Activated CD4-positive, alpha-beta memory T cell treated with anti-CD3 and anti-CD28 coated beads, Interleukin-2, amount 10 ng/mL, durations not matched to agents 7 days and 5 days (primary cell): ENCODE measurements at regions of chr14 and their contacts with region 1.

Region 1: GRCh38 chr14:52563120-52563519 is 10.5 kb downstream of the GPR137C start:
- DNase-seq: no peak
- H3K4me3 Mint-ChIP-seq: no peak overlapping the region
- H3K27ac Mint-ChIP-seq: no peak overlapping the region
- H3K4me1 Mint-ChIP-seq: no peaks in the 10 kb centered on the region
- H3K27me3 Mint-ChIP-seq: peaks cover 30% of the 10 kb centered on the region

Region 2: DNA sequence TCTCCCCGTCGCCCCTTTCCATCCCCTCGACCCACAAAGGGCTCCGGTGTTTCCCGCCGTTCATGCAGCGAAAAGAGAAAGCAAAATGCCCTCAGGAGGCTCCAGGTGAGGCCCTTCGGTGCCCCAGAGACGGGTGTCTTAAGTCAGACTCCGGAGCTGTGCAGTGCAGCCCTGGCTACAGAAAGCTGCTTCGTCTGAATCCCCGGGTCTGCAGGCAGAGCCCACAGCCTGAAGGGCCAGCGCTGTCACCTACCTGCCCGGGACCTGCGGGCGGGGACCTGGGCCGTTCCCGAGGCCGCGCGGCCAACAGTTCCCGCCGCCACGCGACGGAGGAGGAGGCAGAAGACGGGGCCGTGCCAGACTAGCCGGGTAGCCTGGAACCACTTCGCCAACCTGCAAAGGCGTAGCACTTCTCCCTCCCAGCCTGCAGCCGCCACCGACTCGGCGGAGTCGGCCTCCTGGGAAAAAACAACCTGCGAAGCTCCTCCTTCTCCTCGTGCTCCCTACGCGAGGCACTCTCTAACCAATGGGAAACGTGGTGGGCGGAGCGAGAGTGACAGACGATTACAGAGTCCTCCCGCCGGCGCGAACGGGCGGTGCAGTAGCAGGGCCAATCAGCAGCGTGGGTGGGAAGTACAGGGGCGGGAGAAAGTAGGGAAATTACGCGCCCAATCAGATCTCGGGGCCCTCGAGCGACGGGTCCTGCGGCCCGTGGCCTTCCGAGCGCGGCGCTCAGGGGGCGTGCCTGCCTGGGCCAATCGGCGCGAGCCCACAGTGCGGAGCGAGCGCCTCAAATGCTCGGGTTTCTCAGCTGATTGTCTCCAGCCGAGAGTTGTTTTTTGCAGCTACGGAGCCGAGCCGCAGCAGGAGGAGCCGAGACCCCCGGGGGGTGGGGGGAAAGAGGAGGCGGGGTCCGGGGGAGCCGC is 10.8 kb before region 1 on chr14 and contains the starts of genes GPR137C and TXNDC16:
- CTCF ChIA-PET with region 1: interaction called, 3 read pairs
- POLR2A ChIA-PET with region 1: interaction called, 13 read pairs
- DNase-seq: peak; percentile 100
- H3K4me3 Mint-ChIP-seq: peak within 1 kb of the TSS; percentile 92
- H3K27ac Mint-ChIP-seq: peak within 1 kb of the TSS; percentile 78
- H3K4me1 Mint-ChIP-seq: peaks cover 27% of the 10 kb centered on the region
- H3K27me3 Mint-ChIP-seq: peaks cover 20% of the 10 kb centered on the region
- total RNA-seq, gene GPR137C: 0.30 to 0.88 TPM
- total RNA-seq, gene TXNDC16: 8.8 to 9.4 TPM

Region 3: GRCh38 chr14:52583544-52583943 is 20.4 kb after region 1 on chr14:
- CTCF ChIA-PET with region 1: no interaction called
- POLR2A ChIA-PET with region 1: no interaction called
- DNase-seq: no peak
- H3K4me3 Mint-ChIP-seq: no peak overlapping the region
- H3K27ac Mint-ChIP-seq: no peak overlapping the region
- H3K4me1 Mint-ChIP-seq: no peaks in the 10 kb centered on the region
- H3K27me3 Mint-ChIP-seq: peaks cover 6% of the 10 kb centered on the region